ENCODE measurements at regions of chr10 and their contacts with region 1.

Region 1: GRCh38 chr10:47165711-47166524 is 134.1 kb upstream of the GDF10 start:
- DNase-seq: peak in 8 of 9 experiments; percentile 34 to 79 (median 52)
- ATAC-seq: peak; percentile 85
- H3K4me3 ChIP-seq: peak overlapping the region; percentile 48 to 73
- H3K4me3 Mint-ChIP-seq: peak overlapping the region; percentile 85
- H3K27ac ChIP-seq: peak overlapping the region; percentile 74 to 79
- H3K27ac Mint-ChIP-seq: peak overlapping the region; percentile 98
- H3K4me1 ChIP-seq: peaks cover 23% of the 10 kb centered on the region
- H3K4me1 Mint-ChIP-seq: peaks cover 31% of the 10 kb centered on the region
- H3K27me3 ChIP-seq: no peaks in the 10 kb centered on the region
- H3K27me3 Mint-ChIP-seq: no peaks in the 10 kb centered on the region
- CTCF ChIP-seq: no peak

Region 2: DNA sequence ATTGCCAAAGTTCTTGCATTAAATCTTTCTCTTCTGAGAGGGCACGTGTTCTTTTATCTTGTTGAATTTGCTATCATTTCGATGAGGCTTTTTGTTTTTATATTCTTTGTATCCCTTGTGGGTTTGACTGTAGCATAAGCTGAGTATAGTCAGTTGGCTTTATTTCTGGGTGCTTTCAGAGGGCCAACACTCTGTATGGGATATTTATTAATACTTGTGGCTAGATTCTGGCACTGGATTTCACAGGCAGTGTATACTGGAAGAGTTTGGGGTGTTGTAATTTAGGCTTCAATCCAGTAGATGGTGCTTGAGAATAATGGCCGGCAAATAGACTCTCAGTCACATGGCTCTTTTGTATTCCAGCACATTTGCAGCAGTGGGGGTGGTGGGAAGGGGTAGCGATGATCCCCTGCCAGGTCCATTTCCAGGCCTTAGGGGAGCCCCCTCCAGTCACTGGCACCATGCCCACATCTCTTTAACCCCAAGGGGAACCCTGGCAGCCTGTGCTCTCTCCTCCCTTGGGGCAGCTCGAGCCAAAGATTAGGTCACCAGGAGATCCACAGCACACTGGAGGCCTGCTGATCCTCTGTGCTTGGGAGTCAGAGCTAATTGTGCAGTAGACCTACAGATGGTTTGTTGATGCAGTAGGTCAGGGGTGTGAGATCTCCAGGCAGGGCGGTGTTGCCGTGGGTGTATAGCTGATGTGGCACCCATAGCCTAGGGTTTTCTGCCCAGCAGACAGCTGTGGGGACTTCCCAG is 172.9 kb before region 1 on chr10:
- CTCF ChIA-PET with region 1: no interaction called
- POLR2A ChIA-PET with region 1: no interaction called
- intact Hi-C with region 1: no loop called
- DNase-seq: no peak
- ATAC-seq: no peak
- H3K4me3 ChIP-seq: no peak overlapping the region
- H3K4me3 Mint-ChIP-seq: no peak overlapping the region
- H3K27ac ChIP-seq: no peak overlapping the region
- H3K27ac Mint-ChIP-seq: no peak overlapping the region
- H3K4me1 ChIP-seq: no peaks in the 10 kb centered on the region
- H3K4me1 Mint-ChIP-seq: no peaks in the 10 kb centered on the region
- H3K27me3 ChIP-seq: no peaks in the 10 kb centered on the region
- H3K27me3 Mint-ChIP-seq: peaks cover 5% of the 10 kb centered on the region
- CTCF ChIP-seq: no peak

Region 3: GRCh38 chr10:47184724-47185330 is 18.9 kb after region 1 on chr10:
- CTCF ChIA-PET with region 1: no interaction called
- POLR2A ChIA-PET with region 1: no interaction called
- intact Hi-C with region 1: no loop called
- DNase-seq: no peak
- ATAC-seq: no peak
- H3K4me3 ChIP-seq: no peak overlapping the region
- H3K4me3 Mint-ChIP-seq: no peak overlapping the region
- H3K27ac ChIP-seq: no peak overlapping the region
- H3K27ac Mint-ChIP-seq: no peak overlapping the region
- H3K4me1 ChIP-seq: no peaks in the 10 kb centered on the region
- H3K4me1 Mint-ChIP-seq: no peaks in the 10 kb centered on the region
- H3K27me3 ChIP-seq: no peaks in the 10 kb centered on the region
- H3K27me3 Mint-ChIP-seq: no peaks in the 10 kb centered on the region
- CTCF ChIP-seq: no peak

Region 4: DNA sequence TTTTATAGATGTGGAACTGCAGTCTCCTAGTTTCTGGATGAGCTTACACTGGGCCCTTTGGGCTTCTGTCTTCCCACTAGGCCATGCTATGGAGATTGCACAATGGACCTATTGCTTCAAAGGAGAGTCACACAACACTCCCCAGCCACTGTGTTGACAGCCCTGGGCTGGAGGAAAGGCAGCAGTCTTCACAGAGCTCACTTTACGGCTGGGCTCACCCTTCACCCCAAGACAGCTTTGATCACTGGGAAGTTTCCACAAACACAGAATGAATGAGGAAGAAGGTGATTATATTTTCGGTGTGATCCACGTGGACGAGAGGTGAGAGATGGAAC is 41.3 kb after region 1 on chr10:
- CTCF ChIA-PET with region 1: interaction called, 3 read pairs
- POLR2A ChIA-PET with region 1: no interaction called
- intact Hi-C with region 1: loop called in 1 of 2 experiments (anchors 5 kb)
- DNase-seq: peak in 2 of 9 experiments; percentile 25 to 48
- ATAC-seq: peak; percentile 52
- H3K4me3 ChIP-seq: peak overlapping the region in 1 of 2 experiments; percentile 20
- H3K4me3 Mint-ChIP-seq: peak overlapping the region; percentile 65
- H3K27ac ChIP-seq: peak overlapping the region; percentile 22 to 62
- H3K27ac Mint-ChIP-seq: peak overlapping the region; percentile 88
- H3K4me1 ChIP-seq: peaks cover 43% of the 10 kb centered on the region
- H3K4me1 Mint-ChIP-seq: peaks cover 65% of the 10 kb centered on the region
- H3K27me3 ChIP-seq: no peaks in the 10 kb centered on the region
- H3K27me3 Mint-ChIP-seq: no peaks in the 10 kb centered on the region
- CTCF ChIP-seq: no peak

Region 5: DNA sequence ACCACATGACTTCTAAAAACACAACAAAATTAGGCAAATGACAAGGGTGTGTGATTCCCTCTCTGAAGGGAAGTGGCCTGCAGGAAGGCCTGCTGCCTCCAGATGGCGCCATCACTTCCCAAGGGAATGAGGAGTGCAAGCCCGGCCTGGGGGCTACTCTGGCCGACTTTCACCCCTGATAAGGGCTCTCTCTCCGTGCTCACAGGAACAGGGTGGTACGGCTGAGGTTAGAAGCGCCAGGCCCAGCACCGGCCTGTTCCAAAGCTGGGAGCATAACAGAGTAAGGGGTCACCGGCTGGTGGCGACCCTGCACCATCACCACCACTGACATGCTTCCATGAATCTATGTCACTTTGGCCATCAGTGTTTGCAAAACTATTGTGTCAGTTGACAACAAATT is 195.4 kb after region 1 on chr10:
- CTCF ChIA-PET with region 1: no interaction called
- POLR2A ChIA-PET with region 1: no interaction called
- intact Hi-C with region 1: no loop called
- DNase-seq: peak in 2 of 9 experiments; percentile 20 to 23
- ATAC-seq: no peak
- H3K4me3 ChIP-seq: no peak overlapping the region
- H3K4me3 Mint-ChIP-seq: no peak overlapping the region
- H3K27ac ChIP-seq: no peak overlapping the region
- H3K27ac Mint-ChIP-seq: no peak overlapping the region
- H3K4me1 ChIP-seq: no peaks in the 10 kb centered on the region
- H3K4me1 Mint-ChIP-seq: no peaks in the 10 kb centered on the region
- H3K27me3 ChIP-seq: no peaks in the 10 kb centered on the region
- H3K27me3 Mint-ChIP-seq: no peaks in the 10 kb centered on the region
- CTCF ChIP-seq: no peak